ENCODE measurements at regions of chr1 and their contacts with region 1.

Region 1: GRCh38 chr1:165367375-165367993 is 11.0 kb upstream of the LMX1A start:
- DNase-seq: peak; percentile 89
- ATAC-seq: peak; percentile 57
- H3K4me3 Mint-ChIP-seq: no peak overlapping the region
- H3K27ac Mint-ChIP-seq: no peak overlapping the region
- H3K4me1 Mint-ChIP-seq: no peaks in the 10 kb centered on the region
- H3K27me3 Mint-ChIP-seq: peaks cover 62% of the 10 kb centered on the region

Region 2: GRCh38 chr1:165109012-165109411 is 258.5 kb before region 1 on chr1:
- CTCF ChIA-PET with region 1: no interaction called
- POLR2A ChIA-PET with region 1: no interaction called
- intact Hi-C with region 1: no loop called
- DNase-seq: no peak
- ATAC-seq: no peak
- H3K4me3 Mint-ChIP-seq: no peak overlapping the region
- H3K27ac Mint-ChIP-seq: no peak overlapping the region
- H3K4me1 Mint-ChIP-seq: no peaks in the 10 kb centered on the region
- H3K27me3 Mint-ChIP-seq: peaks cover 8% of the 10 kb centered on the region

Region 3: DNA sequence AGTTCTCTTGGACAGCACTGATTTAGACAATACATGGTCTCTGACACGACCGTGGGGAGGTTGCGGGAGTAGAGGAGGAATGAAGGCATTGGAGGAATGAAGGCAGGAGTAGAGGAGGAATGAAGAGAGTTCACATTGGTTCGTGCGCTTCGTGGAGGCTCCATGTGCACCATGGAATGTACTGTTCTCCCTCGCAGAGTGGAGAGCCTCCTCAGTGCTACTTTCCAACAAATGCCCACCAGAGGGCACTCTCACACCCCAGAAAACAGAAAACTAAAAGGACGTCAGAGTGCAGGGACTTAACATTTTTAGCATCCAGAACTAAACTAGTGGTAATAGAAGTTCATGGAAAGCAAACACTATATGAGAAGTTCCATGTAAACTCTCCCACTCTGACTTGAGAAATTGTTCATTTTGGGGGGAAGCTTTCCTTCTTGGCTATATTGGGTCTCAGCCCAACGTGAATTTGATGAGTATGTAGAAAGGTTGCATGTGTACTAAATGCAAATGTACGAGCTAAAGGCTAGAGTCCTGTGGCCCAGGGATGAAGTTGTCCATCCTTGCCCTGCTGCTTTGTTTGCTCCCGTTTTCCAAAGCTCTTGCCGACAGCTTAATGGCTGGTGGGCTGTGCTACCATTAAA is 222.6 kb before region 1 on chr1:
- CTCF ChIA-PET with region 1: interaction called, 4 read pairs
- POLR2A ChIA-PET with region 1: no interaction called
- intact Hi-C with region 1: loop called in 1 of 2 experiments (anchors 1 kb)
- DNase-seq: peak; percentile 57
- ATAC-seq: peak; percentile 30
- H3K4me3 Mint-ChIP-seq: no peak overlapping the region
- H3K27ac Mint-ChIP-seq: no peak overlapping the region
- H3K4me1 Mint-ChIP-seq: no peaks in the 10 kb centered on the region
- H3K27me3 Mint-ChIP-seq: peaks cover 15% of the 10 kb centered on the region

Region 4: GRCh38 chr1:165342587-165342986 is 24.9 kb before region 1 on chr1:
- CTCF ChIA-PET with region 1: interaction called, 18 read pairs
- POLR2A ChIA-PET with region 1: no interaction called
- intact Hi-C with region 1: no loop called
- DNase-seq: no peak
- ATAC-seq: no peak
- H3K4me3 Mint-ChIP-seq: no peak overlapping the region
- H3K27ac Mint-ChIP-seq: no peak overlapping the region
- H3K4me1 Mint-ChIP-seq: no peaks in the 10 kb centered on the region
- H3K27me3 Mint-ChIP-seq: peaks cover 31% of the 10 kb centered on the region

Region 5: DNA sequence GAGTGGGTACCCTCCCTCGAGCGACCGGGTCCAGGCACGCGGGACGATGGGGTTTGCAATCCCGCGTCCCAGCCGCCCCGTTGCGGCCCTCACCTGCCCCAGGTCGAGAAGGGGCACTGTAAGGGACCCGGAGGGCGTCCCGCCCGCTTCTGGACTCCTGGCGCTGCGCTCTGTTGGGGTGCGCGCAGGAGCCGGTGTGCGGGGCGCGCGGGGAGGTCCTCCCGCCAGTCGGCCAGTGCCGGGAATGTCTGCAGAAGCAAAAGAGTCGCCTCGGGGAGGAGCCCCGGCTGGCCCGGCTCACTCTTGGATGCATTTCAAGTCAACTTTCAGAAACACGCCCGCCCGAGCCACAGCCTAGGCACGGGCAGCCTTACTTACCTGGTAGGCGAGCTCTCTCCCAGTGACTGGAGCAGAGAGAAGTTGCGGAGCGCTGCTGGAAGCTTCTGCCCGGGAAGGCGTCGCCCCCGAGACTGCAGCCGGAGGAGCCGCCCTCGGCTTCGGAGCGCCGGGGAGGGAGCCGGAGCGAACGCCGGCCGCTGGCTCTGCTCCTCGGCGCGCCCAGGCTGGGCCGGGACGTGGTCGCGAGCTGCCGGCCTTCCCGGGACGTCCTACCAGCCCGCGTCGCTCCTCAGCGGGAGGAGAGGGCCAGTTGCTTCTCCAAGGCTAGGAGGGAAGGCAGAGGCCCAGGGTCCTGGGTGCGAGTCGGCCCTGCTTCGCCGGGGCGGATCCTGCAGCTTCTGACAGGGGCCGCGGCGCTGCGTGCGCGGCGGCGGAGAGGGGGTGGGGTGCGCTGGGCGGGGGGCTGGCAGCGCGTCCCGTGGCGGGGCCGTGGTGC is 11.3 kb before region 1 on chr1 and contains the start of gene LMX1A:
- CTCF ChIA-PET with region 1: interaction called, 56 read pairs
- POLR2A ChIA-PET with region 1: no interaction called
- intact Hi-C with region 1: no loop called
- DNase-seq: no peak
- ATAC-seq: no peak
- H3K4me3 Mint-ChIP-seq: no peak within 1 kb of the TSS
- H3K27ac Mint-ChIP-seq: no peak within 1 kb of the TSS
- H3K4me1 Mint-ChIP-seq: peaks cover 12% of the 10 kb centered on the region
- H3K27me3 Mint-ChIP-seq: peaks cover 63% of the 10 kb centered on the region
- total RNA-seq, gene LMX1A: not detected

Region 6: DNA sequence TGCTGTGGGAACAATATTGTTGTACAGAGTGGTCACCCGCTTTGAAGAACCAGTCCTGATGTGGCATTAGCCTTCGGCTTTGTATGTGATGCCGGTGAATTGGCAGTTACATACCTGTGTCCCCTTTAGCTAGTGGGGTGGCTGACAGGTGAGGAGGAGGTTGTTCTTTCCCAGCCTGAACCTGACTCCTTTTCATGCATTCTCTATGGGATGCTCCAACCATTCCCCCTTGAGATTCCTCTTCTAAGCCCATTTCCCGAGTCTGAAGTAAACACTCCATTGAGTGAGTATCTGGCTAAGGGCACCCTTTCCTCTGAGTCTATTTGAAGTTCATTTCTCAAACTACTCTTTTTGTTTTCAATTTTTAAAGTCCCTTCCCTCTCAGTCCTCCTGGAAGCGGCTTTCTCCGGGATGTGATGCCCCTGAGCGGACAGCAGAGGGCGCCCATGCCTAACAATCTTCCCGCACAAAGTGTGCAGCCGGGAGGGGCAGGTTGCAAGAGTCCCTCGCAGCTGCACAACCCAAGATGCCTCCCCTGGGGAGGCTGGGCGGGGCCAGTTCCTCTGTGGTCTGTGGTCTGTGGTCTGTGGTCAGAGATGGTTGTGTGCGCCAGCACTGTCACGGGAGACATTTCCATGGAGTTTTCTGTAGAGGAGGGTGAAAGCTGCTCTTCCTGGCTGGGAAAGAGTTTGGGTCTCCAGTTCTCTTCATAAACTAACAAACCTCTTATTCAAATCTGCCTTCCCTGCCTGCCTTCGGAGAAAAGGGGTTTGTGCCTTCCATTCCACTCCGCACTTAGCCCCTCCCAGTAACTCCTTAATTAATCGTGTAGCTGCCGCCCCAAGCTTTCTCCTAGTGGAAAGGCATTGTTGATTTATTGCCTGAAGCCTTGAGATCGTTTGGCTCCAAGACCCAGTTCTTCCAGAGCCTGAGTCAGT is 25.4 kb after region 1 on chr1:
- CTCF ChIA-PET with region 1: interaction called, 30 read pairs
- POLR2A ChIA-PET with region 1: no interaction called
- intact Hi-C with region 1: no loop called
- DNase-seq: peak; percentile 93
- ATAC-seq: peak; percentile 95
- H3K4me3 Mint-ChIP-seq: peak overlapping the region; percentile 62
- H3K27ac Mint-ChIP-seq: peak overlapping the region; percentile 43
- H3K4me1 Mint-ChIP-seq: peaks cover 15% of the 10 kb centered on the region
- H3K27me3 Mint-ChIP-seq: peaks cover 67% of the 10 kb centered on the region

Region 7: GRCh38 chr1:165411396-165411795 is 43.9 kb after region 1 on chr1:
- CTCF ChIA-PET with region 1: interaction called, 10 read pairs
- POLR2A ChIA-PET with region 1: no interaction called
- intact Hi-C with region 1: no loop called
- DNase-seq: no peak
- ATAC-seq: no peak
- H3K4me3 Mint-ChIP-seq: no peak overlapping the region
- H3K27ac Mint-ChIP-seq: no peak overlapping the region
- H3K4me1 Mint-ChIP-seq: no peaks in the 10 kb centered on the region
- H3K27me3 Mint-ChIP-seq: peaks cover 49% of the 10 kb centered on the region

Measured in activated CD4-positive, alpha-beta T cell treated with anti-CD3 and anti-CD28 coated beads for 36 hours (primary cell).